ENCODE measurements at regions of chr19 and their contacts with region 1.

Region 1: DNA sequence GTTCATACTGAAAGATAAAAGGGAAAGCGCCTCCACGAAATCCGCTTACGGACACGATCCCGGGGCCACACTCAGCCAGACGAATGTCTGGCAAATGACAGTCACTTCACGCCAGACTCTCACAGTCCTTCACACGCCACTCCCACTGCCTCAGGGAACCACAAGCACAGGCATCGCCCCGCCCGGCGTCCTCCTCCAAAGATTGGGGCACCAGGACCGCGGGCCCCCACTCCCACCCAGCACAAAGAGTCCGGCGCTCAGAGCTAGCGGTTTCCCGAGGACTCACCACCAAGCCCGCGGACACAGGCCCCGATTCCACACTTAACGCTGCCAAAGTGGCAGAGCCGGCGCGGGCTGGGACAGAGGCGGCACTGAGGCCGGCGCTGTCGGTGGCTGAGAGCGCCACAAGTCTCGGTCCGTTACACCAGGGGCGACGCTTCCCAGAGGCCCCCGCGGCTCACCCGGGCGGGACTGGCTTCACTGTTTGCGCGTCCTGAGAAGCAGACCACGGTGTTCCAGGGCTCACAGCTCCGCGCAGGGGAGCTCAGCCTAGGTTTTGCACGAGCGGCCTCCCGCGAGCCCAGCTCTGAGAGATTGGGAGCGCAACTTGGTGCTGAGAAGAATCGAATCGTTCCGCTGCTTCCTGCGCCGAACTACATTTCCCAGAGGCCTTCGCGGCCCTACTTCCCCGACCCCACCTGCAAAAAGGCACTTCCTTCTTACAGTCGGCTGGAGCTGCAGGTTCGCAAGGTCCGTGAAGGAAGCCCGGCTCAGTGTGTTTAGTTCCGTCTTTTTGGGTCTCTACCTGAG is at the start of gene ZNF569:
- DNase-seq: peak; percentile 94
- H3K4me3 ChIP-seq: peak within 1 kb of the TSS; percentile 62 to 91 (median 80)
- H3K27ac ChIP-seq: peak within 1 kb of the TSS; percentile 90 to 95 (median 94)
- H3K4me1 ChIP-seq: peaks cover 0 to 30% (median 23%) of the 10 kb centered on the region in 4 donors
- H3K27me3 ChIP-seq: no peaks in the 10 kb centered on the region
- CTCF ChIP-seq: no peak
- EP300 ChIP-seq: no peak
- POLR2A ChIP-seq: peak in 1 of 2 donors; percentile 12
- total RNA-seq, gene ZNF569: 4.7 to 10.7 (median 5.9) TPM

Region 2: GRCh38 chr19:37217855-37218591 is 249.0 kb before region 1 on chr19 and contains the start of gene ZNF383:
- intact Hi-C with region 1: loop called (anchors 5 kb)
- DNase-seq: peak; percentile 88
- H3K4me3 ChIP-seq: peak within 1 kb of the TSS; percentile 71 to 91 (median 82)
- H3K27ac ChIP-seq: peak within 1 kb of the TSS; percentile 86 to 95 (median 93)
- H3K4me1 ChIP-seq: peaks cover 0 to 16% (median 11%) of the 10 kb centered on the region in 4 donors
- H3K27me3 ChIP-seq: no peaks in the 10 kb centered on the region
- CTCF ChIP-seq: no peak
- EP300 ChIP-seq: no peak
- POLR2A ChIP-seq: peak; percentile 12 to 37
- total RNA-seq, gene ZNF383: 10.9 to 19.7 (median 13.0) TPM

Region 3: GRCh38 chr19:37506387-37507166 is 39.6 kb after region 1 on chr19 and contains the start of gene ZNF793:
- intact Hi-C with region 1: loop called (anchors 1 kb)
- DNase-seq: peak; percentile 90
- H3K4me3 ChIP-seq: peak within 1 kb of the TSS; percentile 61 to 71 (median 67)
- H3K27ac ChIP-seq: peak within 1 kb of the TSS; percentile 88 to 95 (median 92)
- H3K4me1 ChIP-seq: peaks cover 0 to 15% (median 9%) of the 10 kb centered on the region in 4 donors
- H3K27me3 ChIP-seq: no peaks in the 10 kb centered on the region
- CTCF ChIP-seq: no peak
- EP300 ChIP-seq: no peak
- POLR2A ChIP-seq: peak in 1 of 2 donors; percentile 47
- total RNA-seq, gene ZNF793: 2.9 to 6.1 (median 5.4) TPM

Region 4: DNA sequence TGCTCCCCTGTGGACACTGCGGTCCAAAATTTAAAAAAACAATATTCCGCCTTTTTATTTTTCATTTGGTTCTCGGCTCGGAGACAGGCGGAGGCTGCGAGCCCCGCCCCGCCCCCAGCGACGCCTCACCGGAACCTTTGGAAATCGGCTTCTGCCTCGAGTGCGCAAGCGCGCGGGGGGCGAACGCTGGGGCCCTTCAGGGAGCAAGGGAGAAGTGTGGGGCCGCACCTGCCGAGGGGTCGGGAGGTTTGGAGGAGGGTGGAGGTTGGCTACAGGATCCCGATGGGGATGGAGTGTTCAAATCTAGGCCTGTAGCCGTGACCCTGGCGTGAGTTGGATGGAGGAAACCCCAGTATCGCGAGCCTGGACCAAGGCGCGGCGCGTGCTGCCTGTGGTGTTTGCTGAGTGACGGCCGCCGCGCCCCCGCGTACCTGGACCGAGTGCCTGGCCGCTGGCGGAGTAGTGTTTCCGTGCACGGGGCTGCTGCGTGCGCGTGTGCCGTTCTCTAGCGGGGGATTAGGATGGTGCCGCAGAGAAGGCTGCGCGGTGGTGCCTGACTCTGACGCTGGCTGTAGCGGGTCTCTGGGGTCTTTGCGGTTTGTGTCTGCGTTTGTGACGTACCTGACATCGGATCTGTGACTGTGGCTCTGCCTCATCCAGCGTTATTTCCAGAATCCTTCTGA is 188.8 kb after region 1 on chr19:
- intact Hi-C with region 1: loop called (anchors 5 kb)
- DNase-seq: peak; percentile 91
- H3K4me3 ChIP-seq: peak overlapping the region; percentile 72 to 83 (median 78)
- H3K27ac ChIP-seq: peak overlapping the region; percentile 91 to 94 (median 94)
- H3K4me1 ChIP-seq: peaks cover 2 to 25% (median 19%) of the 10 kb centered on the region in 4 donors
- H3K27me3 ChIP-seq: no peaks in the 10 kb centered on the region
- CTCF ChIP-seq: no peak
- EP300 ChIP-seq: no peak
- POLR2A ChIP-seq: peak in 1 of 2 donors; percentile 4

Region 5: GRCh38 chr19:37779127-37780005 is 312.4 kb after region 1 on chr19 and contains the start of gene ZNF573:
- intact Hi-C with region 1: loop called (anchors 2 kb)
- DNase-seq: peak; percentile 87
- H3K4me3 ChIP-seq: peak within 1 kb of the TSS; percentile 52 to 68 (median 66)
- H3K27ac ChIP-seq: peak within 1 kb of the TSS; percentile 82 to 91 (median 86)
- H3K4me1 ChIP-seq: peaks cover 0 to 21% (median 5%) of the 10 kb centered on the region in 4 donors
- H3K27me3 ChIP-seq: no peaks in the 10 kb centered on the region
- CTCF ChIP-seq: peak in 3 of 4 experiments; percentile 19 to 32 (median 31)
- EP300 ChIP-seq: no peak
- POLR2A ChIP-seq: peak; percentile 21 to 40
- total RNA-seq, gene ZNF573: 6.8 to 9.7 (median 7.6) TPM